ENCODE measurements at regions of chr17 and their contacts with region 1.

Region 1: GRCh38 chr17:60557805-60558204 is 31.8 kb upstream of the APPBP2 start:
- DNase-seq: no peak
- ATAC-seq: no peak
- H3K4me3 Mint-ChIP-seq: no peak overlapping the region
- H3K27ac Mint-ChIP-seq: no peak overlapping the region
- H3K4me1 Mint-ChIP-seq: no peaks in the 10 kb centered on the region
- H3K27me3 Mint-ChIP-seq: no peaks in the 10 kb centered on the region
- CTCF ChIP-seq: no peak

Region 2: GRCh38 chr17:59221159-59221847 is 1336.5 kb before region 1 on chr17:
- CTCF ChIA-PET with region 1: no interaction called
- POLR2A ChIA-PET with region 1: no interaction called
- intact Hi-C with region 1: no loop called
- DNase-seq: peak; percentile 24
- ATAC-seq: no peak
- H3K4me3 Mint-ChIP-seq: peak overlapping the region; percentile 96
- H3K27ac Mint-ChIP-seq: peak overlapping the region; percentile 87
- H3K4me1 Mint-ChIP-seq: peaks cover 6% of the 10 kb centered on the region
- H3K27me3 Mint-ChIP-seq: no peaks in the 10 kb centered on the region
- CTCF ChIP-seq: no peak

Region 3: GRCh38 chr17:60568561-60568960 is 10.8 kb after region 1 on chr17:
- CTCF ChIA-PET with region 1: interaction called, 15 read pairs
- POLR2A ChIA-PET with region 1: no interaction called
- intact Hi-C with region 1: no loop called
- DNase-seq: no peak
- ATAC-seq: no peak
- H3K4me3 Mint-ChIP-seq: no peak overlapping the region
- H3K27ac Mint-ChIP-seq: no peak overlapping the region
- H3K4me1 Mint-ChIP-seq: no peaks in the 10 kb centered on the region
- H3K27me3 Mint-ChIP-seq: peaks cover 4% of the 10 kb centered on the region
- CTCF ChIP-seq: no peak

Measured in activated CD8-positive, alpha-beta T cell treated with anti-CD3 and anti-CD28 coated beads for 36 hours (primary cell).